HepG2 (cell line): ENCODE measurements at regions of chr1 and their contacts with region 1.

Region 1: GRCh38 chr1:203711251-203712007 is 53.6 kb upstream of the LAX1 start:
- DNase-seq: no peak
- ATAC-seq: no peak
- H3K4me3 ChIP-seq: no peak overlapping the region
- H3K27ac ChIP-seq: no peak overlapping the region
- H3K4me1 ChIP-seq: no peaks in the 10 kb centered on the region
- H3K27me3 ChIP-seq: no peaks in the 10 kb centered on the region
- CTCF ChIP-seq: no peak
- EP300 ChIP-seq: no peak
- POLR2A ChIP-seq: no peak
- RAD21 ChIP-seq: no peak

Region 2: DNA sequence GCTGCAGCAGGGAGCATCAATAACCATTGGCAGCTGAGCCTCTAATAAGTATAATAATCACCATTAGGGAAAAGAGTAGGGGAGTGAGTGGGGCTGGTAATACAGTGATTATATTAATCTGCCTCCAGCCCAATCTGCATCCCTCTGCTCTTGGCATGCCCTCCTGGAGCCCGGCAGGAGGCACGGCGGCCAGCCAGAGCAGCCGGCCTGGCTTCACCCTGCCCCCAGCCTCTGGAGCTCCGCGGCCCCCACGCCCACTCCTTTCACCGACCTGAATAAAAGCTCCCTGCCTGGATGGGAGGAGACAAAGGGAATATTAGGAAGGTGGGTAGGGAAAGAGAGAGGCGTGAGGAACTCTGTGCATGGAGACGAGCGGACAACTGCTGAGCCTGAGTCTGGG is 189.2 kb before region 1 on chr1:
- CTCF ChIA-PET with region 1: no interaction called
- POLR2A ChIA-PET with region 1: no interaction called
- in situ Hi-C with region 1: no loop called
- intact Hi-C with region 1: no loop called
- DNase-seq: no peak
- ATAC-seq: no peak
- H3K4me3 ChIP-seq: no peak overlapping the region
- H3K27ac ChIP-seq: no peak overlapping the region
- H3K4me1 ChIP-seq: no peaks in the 10 kb centered on the region
- H3K27me3 ChIP-seq: peaks cover 0 to 4% of the 10 kb centered on the region in 2 experiments; a peak in 1 of 5 replicates
- CTCF ChIP-seq: no peak
- EP300 ChIP-seq: no peak
- POLR2A ChIP-seq: no peak
- RAD21 ChIP-seq: no peak

Region 3: DNA sequence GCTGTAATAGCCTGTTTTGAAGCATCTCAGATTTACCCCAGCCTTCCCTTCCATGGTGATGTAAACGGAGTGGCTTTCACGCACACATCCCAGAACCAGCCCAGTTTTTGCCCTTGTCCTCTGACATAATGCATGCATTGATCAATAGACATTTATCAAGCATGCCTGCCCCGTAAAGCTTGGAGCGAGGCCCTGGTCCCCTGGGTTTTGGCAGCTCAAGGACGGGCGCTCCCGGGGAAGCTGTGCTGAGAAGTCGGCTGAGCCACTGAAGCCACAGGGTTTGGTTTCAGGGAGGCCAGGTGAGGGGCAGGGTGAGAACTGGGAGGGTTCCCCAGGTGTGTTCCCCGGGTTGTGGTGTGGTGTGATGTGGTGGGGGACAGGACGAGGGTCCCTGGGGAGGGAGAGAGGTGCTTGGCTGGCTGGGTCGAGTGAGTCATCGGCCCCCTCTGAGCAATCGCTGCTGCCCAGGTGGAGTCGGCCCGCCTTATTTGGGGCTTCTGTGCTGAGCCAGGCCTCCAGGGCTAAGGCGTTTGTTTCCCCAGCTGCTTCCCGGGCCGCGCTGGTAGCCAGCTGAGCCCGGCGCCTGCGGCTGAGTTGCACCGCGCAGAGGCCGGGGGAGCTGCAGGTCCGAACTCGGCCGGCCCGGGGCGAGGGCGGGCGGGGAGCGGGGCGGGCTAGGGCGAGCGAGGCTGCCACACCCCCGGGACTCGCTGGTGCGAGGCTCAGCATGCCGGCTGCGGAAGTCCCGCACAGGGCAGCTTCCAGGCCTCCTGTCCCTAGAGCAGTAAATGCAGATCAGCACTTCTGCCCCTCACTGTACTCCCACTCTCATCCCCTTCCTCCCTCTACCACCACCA is 61.2 kb before region 1 on chr1:
- CTCF ChIA-PET with region 1: no interaction called
- POLR2A ChIA-PET with region 1: no interaction called
- in situ Hi-C with region 1: no loop called
- intact Hi-C with region 1: no loop called
- DNase-seq: no peak
- ATAC-seq: peak; percentile 99
- H3K4me3 ChIP-seq: peak overlapping the region in 2 of 3 experiments; percentile 13 to 50; a peak in 2 of 6 replicates
- H3K27ac ChIP-seq: no peak overlapping the region
- H3K4me1 ChIP-seq: peaks cover 5% of the 10 kb centered on the region; the same call in 1 of the 2 replicates
- H3K27me3 ChIP-seq: peaks cover 2 to 9% of the 10 kb centered on the region in 2 experiments; a peak in 2 of 5 replicates
- CTCF ChIP-seq: no peak
- EP300 ChIP-seq: no peak
- POLR2A ChIP-seq: no peak
- RAD21 ChIP-seq: no peak

Region 4: DNA sequence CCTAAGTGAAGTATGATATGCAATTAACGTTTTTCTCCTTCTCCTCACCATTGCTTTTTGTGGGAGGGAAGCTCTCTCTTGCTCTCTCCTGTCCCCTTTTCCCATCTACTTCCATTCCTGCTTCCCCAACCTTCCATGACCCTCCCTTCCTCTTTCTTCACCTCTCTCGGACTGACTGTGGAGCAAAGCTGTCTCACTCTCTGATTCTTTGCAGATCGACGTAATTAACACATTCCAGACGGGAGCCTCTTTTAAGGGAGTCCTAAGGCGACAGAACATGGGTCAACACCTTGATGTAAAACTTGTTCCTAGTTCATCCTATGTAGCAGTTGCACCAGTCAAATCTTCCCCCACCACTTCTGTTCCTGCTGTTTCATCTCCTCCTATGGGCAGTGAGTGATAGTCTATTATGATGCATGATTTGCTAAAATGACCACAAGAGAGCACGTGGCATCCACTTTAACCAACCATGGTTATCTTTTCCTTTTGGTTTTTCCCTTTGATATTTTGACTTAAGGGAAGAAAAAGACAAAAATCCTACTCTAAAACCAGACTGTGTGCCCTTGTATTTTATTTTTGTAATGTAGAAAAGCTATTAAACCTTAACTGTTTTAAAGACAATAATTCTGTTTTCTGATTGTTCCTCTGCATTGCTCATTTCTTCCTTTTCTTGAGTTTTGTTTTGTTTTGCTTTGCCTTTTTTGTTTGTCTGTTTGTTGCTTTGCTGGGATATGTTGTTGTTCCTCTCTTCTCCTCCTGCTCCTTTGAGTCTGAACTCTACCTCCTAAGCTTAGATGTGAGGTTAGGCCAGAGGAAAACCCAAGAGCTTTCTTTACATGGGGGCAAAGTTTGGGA is 21.8 kb after region 1 on chr1:
- CTCF ChIA-PET with region 1: no interaction called
- POLR2A ChIA-PET with region 1: no interaction called
- in situ Hi-C with region 1: no loop called
- intact Hi-C with region 1: no loop called
- DNase-seq: no peak
- ATAC-seq: no peak
- H3K4me3 ChIP-seq: no peak overlapping the region
- H3K27ac ChIP-seq: no peak overlapping the region
- H3K4me1 ChIP-seq: no peaks in the 10 kb centered on the region
- H3K27me3 ChIP-seq: no peaks in the 10 kb centered on the region
- CTCF ChIP-seq: no peak
- EP300 ChIP-seq: no peak
- POLR2A ChIP-seq: no peak
- RAD21 ChIP-seq: no peak

Region 5: DNA sequence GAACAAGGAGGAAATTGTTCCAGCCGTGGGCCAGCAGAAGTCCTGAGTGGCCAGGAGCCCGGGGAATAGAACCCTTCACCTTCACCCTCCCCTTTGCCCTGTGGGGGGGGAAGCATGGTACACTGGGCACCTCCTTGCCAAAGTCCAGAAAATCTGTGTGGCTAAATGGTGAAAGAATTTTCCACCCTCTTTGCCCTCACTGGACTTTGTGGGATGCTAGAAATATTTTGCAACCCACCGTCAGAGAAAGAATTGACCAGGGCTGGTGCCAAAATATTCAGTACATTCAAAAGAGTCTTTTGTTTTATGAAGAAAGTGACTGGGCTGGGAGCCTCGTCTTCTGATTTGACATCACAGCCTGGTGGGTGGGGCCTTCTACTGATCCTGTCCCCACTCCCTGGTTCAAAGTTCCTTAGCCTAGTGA is 1173.9 kb after region 1 on chr1:
- CTCF ChIA-PET with region 1: no interaction called
- POLR2A ChIA-PET with region 1: no interaction called
- in situ Hi-C with region 1: no loop called
- intact Hi-C with region 1: loop called (anchors 10 kb)
- DNase-seq: peak; percentile 63
- ATAC-seq: no peak; the same call in 2 of the 3 replicates
- H3K4me3 ChIP-seq: no peak overlapping the region
- H3K27ac ChIP-seq: no peak overlapping the region
- H3K4me1 ChIP-seq: peaks cover 29% of the 10 kb centered on the region
- H3K27me3 ChIP-seq: peaks cover 0 to 18% of the 10 kb centered on the region in 2 experiments; a peak in 3 of 5 replicates
- CTCF ChIP-seq: no peak
- EP300 ChIP-seq: no peak
- POLR2A ChIP-seq: no peak
- RAD21 ChIP-seq: no peak